Astrocyte of the cerebellum (primary cell): ENCODE measurements at regions of chr1 and their contacts with region 1.

Region 1: DNA sequence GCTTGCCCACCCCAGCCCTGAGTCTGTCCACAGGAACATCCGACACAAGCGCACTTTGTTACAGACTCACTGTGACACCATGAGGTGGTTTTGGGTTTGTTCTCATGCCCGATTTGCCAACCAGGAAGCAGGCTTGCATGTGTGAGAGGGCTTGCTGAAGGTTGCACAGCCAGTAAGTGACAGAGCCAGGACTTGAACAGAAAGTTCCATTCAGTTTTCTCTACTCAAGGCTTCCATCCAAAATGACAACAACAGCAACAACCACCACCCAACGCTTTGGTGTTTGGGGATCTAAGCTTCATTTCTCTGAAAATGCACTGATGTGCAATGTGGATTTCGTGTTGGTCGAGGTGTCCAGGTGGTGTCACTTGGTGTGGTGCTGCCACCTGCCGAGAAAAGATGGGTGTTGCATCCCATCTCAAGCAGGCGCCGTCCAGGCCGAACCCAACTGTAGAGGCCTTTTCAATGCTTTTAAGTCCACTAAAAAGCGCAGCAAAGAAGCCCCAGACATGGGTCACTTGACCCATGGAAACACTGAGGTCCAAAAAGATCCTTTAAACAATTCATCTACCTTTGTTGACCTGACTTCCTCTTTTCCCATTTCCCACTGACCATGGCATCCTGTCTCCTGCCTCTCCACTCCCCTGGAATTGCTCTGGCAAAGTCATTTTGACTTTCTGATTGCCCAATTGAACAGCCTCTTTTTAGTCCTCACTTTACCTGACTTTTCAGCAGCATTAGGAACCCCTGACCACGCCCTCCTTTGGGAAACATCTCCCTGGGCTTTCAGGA is 12.2 kb downstream of the CITED4 start:
- DNase-seq: peak; percentile 27
- H3K4me3 ChIP-seq: no peak overlapping the region
- CTCF ChIP-seq: peak; percentile 86

Region 2: GRCh38 chr1:40769815-40770214 is 80.2 kb before region 1 on chr1:
- in situ Hi-C with region 1: loop called (anchors 5 kb)
- DNase-seq: no peak
- H3K4me3 ChIP-seq: no peak overlapping the region
- CTCF ChIP-seq: peak; percentile 25

Region 3: DNA sequence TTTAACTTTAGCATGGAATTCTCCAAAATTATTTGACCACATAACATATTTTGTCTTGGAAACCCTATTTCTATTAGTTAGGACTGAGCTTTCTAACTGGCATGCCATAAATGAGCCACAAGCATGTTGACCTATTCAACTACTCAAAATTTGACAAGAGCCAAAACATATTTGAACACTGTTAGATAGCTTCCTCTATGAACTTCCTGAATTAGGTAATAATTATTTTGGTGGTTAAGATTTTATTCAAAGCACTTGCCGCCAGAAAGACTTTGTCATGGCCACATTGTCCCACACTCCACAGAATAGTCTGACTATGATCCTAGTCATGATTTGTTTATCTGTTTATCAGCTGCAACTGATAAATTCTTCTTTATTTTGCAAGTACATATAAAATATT is 106.4 kb after region 1 on chr1:
- in situ Hi-C with region 1: loop called (anchors 5 kb)
- DNase-seq: no peak
- H3K4me3 ChIP-seq: no peak overlapping the region
- CTCF ChIP-seq: no peak